PC-3 (cell line): ENCODE measurements at regions of chr4 and their contacts with region 1.

Region 1: DNA sequence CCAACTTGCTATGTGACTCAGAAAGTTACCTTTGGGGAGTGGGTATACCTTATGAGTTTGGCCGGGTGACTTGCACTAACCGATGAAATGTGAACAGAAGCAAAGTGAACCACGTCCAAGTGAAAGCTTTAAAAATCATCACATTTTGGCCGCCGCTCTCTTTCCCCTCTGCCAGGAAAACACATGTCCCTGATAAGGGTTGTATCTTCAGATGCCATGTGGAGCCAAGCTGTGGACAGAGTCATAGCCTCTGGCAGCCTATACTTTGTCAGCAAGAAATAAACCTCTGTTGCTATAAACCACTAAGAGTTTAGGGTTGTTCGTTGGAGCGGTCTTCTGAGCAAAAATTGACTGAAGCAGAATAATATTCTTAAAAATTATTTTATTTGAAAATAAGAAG is 92.3 kb downstream of the PRDM5 start:
- DNase-seq: no peak
- ATAC-seq: no peak
- H3K4me3 ChIP-seq: no peak overlapping the region
- H3K27ac ChIP-seq: no peak overlapping the region
- H3K4me1 ChIP-seq: peaks cover 16% of the 10 kb centered on the region
- H3K27me3 ChIP-seq: no peaks in the 10 kb centered on the region
- CTCF ChIP-seq: no peak

Region 2: GRCh38 chr4:119841361-119841760 is 988.8 kb before region 1 on chr4:
- CTCF ChIA-PET with region 1: no interaction called
- POLR2A ChIA-PET with region 1: no interaction called
- intact Hi-C with region 1: loop called (anchors 10 kb)
- DNase-seq: peak; percentile 9
- ATAC-seq: peak; percentile 29
- H3K4me3 ChIP-seq: no peak overlapping the region
- H3K27ac ChIP-seq: no peak overlapping the region
- H3K4me1 ChIP-seq: no peaks in the 10 kb centered on the region
- H3K27me3 ChIP-seq: no peaks in the 10 kb centered on the region
- CTCF ChIP-seq: no peak

Region 3: GRCh38 chr4:120855307-120856001 is 25.2 kb after region 1 on chr4:
- CTCF ChIA-PET with region 1: no interaction called
- POLR2A ChIA-PET with region 1: no interaction called
- intact Hi-C with region 1: no loop called
- DNase-seq: no peak
- ATAC-seq: no peak
- H3K4me3 ChIP-seq: no peak overlapping the region
- H3K27ac ChIP-seq: no peak overlapping the region
- H3K4me1 ChIP-seq: no peaks in the 10 kb centered on the region
- H3K27me3 ChIP-seq: no peaks in the 10 kb centered on the region
- CTCF ChIP-seq: no peak